ENCODE measurements at regions of chr21 and their contacts with region 1.

Region 1: DNA sequence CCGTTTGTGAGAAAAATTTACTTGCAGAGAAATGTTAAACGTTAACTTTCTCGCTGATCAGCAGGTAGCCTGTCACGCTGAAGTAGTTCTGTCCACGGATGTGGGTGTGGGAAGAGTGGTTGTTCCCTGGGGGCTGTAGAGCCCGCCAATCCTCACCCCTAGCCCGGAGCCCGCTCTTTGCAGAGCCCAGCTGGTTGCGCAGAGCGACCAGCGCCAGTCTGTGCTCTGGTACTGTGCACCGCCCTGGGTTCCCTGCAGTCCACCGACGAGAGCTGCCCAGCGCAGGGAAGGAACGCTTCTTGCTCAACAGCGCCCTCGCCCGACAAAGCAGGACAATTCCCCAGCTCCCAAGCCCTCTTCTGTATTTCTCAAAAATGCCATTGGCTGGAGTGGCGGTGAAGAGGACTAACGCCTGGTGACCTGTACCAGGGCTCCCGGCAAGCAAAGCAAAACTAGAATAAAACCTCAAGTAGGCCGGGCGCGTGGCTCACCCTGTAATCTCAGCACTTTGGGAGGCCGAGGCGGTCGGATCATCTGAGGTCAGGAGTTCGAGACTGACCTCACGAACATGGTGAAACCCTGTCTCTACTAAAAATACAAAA is 3.3 kb downstream of the RIPPLY3 start:
- DNase-seq: peak; percentile 70 to 74 (median 72)
- H3K4me3 ChIP-seq: peak overlapping the region in 1 of 3 experiments; percentile 7
- H3K4me3 Mint-ChIP-seq: peak overlapping the region; percentile 51 to 87
- H3K27ac ChIP-seq: no peak overlapping the region
- H3K27ac Mint-ChIP-seq: no peak overlapping the region
- H3K4me1 ChIP-seq: peaks cover 10 to 19% of the 10 kb centered on the region in 2 donors
- H3K4me1 Mint-ChIP-seq: peaks cover 11% of the 10 kb centered on the region
- H3K27me3 ChIP-seq: peaks cover 28 to 48% of the 10 kb centered on the region in 2 donors
- H3K27me3 Mint-ChIP-seq: peaks cover 56 to 68% (median 58%) of the 10 kb centered on the region in 3 donors
- CTCF ChIP-seq: peak; percentile 87

Region 2: GRCh38 chr21:36917471-36918158 is 92.2 kb before region 1 on chr21:
- intact Hi-C with region 1: no loop called
- DNase-seq: no peak
- H3K4me3 ChIP-seq: no peak overlapping the region
- H3K4me3 Mint-ChIP-seq: no peak overlapping the region
- H3K27ac ChIP-seq: no peak overlapping the region
- H3K27ac Mint-ChIP-seq: no peak overlapping the region
- H3K4me1 ChIP-seq: no peaks in the 10 kb centered on the region
- H3K4me1 Mint-ChIP-seq: no peaks in the 10 kb centered on the region
- H3K27me3 ChIP-seq: no peaks in the 10 kb centered on the region
- H3K27me3 Mint-ChIP-seq: peaks cover 0 to 3% (median 0%) of the 10 kb centered on the region in 3 donors
- CTCF ChIP-seq: no peak

Region 3: GRCh38 chr21:36934864-36935420 is 74.9 kb before region 1 on chr21:
- intact Hi-C with region 1: loop called in 1 of 2 experiments (anchors 2 kb)
- DNase-seq: no peak
- H3K4me3 ChIP-seq: no peak overlapping the region
- H3K4me3 Mint-ChIP-seq: no peak overlapping the region
- H3K27ac ChIP-seq: no peak overlapping the region
- H3K27ac Mint-ChIP-seq: no peak overlapping the region
- H3K4me1 ChIP-seq: no peaks in the 10 kb centered on the region
- H3K4me1 Mint-ChIP-seq: no peaks in the 10 kb centered on the region
- H3K27me3 ChIP-seq: no peaks in the 10 kb centered on the region
- H3K27me3 Mint-ChIP-seq: no peaks in the 10 kb centered on the region
- CTCF ChIP-seq: no peak